HepG2 (cell line): ENCODE measurements at regions of chr15 and their contacts with region 1.

Region 1: GRCh38 chr15:34437687-34438086 is at the start of gene GOLGA8A:
- DNase-seq: peak; percentile 26
- ATAC-seq: peak; percentile 39
- H3K4me3 ChIP-seq: peak within 1 kb of the TSS; percentile 47 to 66 (median 61); a peak in 5 of 6 replicates
- H3K27ac ChIP-seq: no peak within 1 kb of the TSS
- H3K4me1 ChIP-seq: peaks cover 10% of the 10 kb centered on the region
- H3K27me3 ChIP-seq: no peaks in the 10 kb centered on the region; a peak in 1 of 5 replicates
- CTCF ChIP-seq: no peak
- EP300 ChIP-seq: no peak
- POLR2A ChIP-seq: peak in 1 of 2 experiments; percentile 38; a peak in 1 of 4 replicates
- RAD21 ChIP-seq: no peak
- total RNA-seq, gene GOLGA8A: 1.6 and 17.1 TPM in 2 replicates

Region 2: DNA sequence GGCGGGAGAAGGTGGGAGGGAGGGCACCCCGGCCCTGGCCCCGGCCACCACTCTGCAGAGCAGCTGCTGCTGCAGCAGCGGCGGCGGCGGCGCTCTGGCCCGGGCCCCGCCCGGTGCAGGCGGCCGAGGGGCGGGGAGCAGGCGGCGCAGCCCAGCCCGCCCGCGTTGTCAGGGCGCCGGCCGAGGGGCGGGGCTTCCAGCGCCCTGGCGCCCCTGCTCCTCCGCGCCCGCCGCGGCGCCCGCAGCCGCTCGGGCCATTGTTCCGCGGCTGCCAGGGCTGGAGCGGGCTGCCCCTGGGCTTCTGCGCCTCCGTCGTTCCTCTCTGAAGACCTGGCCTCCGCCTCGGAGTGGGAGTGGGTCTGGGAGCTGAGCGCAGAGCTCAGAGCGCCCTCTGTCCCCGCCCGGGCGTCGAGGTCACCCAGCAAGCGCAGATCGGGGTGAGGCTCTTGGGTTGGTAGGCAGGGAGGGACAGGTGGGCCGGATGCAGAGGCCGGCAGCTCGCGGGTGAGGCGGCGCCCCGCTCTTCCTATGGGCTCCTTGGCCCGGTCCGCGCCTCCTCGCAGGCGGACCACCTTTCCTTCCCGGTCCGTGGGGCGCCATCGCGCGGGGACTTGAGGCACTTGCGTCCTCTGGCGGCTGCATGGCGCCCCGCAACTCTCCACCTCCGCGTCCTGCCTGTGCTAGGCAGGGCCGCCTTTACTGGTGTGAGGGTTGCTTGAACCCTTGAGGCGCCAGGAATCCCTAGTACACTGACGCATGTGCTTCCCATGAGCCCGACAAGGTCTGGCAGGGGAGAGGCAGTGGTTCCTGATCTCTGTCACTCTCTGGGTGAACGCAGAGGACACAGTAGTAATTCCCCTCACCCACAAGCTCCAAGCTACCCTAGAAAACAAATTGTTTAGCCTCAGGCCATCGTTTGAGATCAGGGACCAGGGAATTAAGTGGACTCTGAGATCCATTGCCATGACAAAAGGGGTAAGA is 70.3 kb before region 1 on chr15 and contains the start of gene LPCAT4:
- CTCF ChIA-PET with region 1: no interaction called
- POLR2A ChIA-PET with region 1: no interaction called
- in situ Hi-C with region 1: loop called (anchors 10 kb)
- intact Hi-C with region 1: no loop called
- DNase-seq: peak; percentile 66
- ATAC-seq: peak; percentile 90
- H3K4me3 ChIP-seq: peak within 1 kb of the TSS; percentile 59 to 94 (median 87)
- H3K27ac ChIP-seq: peak within 1 kb of the TSS; percentile 94
- H3K4me1 ChIP-seq: peaks cover 21% of the 10 kb centered on the region
- H3K27me3 ChIP-seq: no peaks in the 10 kb centered on the region
- CTCF ChIP-seq: peak; percentile 98
- EP300 ChIP-seq: 0 out of 4 replicates have a peak, but pooled peaks of 1 of the 2 experiments have one; percentile 18
- POLR2A ChIP-seq: peak; percentile 74 to 87
- RAD21 ChIP-seq: peak; percentile 84
- total RNA-seq, gene LPCAT4: 2.2 and 8.1 TPM in 2 replicates

Region 3: DNA sequence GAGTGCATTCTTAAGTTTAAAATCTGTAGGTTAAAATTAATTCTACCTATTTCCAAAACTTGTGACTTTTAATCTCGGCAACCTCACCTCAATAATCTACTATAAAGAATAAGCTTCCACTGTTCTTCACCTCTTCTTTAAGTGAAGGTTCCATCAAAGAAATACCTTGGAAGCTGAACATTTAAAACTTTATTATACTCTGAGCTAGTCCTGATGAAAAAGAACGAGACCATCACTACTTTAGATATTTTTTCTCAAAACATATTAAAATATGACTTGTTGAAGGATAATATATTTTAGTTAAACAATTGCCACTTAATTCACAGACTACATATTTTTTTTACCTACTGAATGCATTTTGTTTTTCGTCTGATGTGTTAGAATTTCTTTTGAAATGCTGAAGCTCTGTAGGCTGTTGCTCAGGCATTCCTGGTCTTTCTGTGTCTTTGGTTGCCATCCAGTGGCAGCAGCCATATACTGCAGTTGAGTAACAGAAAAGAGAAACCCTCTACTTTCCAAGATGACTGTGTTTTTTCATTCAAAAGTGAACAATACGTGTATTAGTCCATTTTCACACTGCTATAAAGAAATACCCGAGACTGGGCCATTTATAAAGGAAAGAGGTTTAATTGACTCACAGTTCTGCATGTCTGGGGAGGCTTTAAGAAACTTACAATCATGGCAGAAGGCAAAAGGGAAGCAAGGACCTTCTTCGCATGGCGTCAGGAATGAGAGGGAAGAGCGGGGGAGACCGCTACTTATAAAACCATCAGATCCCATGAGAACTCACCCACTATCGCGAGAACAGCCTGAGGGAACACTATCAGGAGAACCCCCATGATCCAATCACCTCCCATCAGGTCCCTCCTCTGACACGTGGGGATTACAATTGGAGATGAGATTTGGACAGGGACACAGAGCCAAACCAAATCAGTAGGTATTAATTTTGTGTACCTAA is 150.3 kb after region 1 on chr15:
- CTCF ChIA-PET with region 1: no interaction called
- POLR2A ChIA-PET with region 1: no interaction called
- in situ Hi-C with region 1: loop called (anchors 25 kb)
- intact Hi-C with region 1: no loop called
- DNase-seq: peak; percentile 80
- ATAC-seq: peak; percentile 42
- H3K4me3 ChIP-seq: peak overlapping the region; percentile 19 to 44 (median 40); a peak in 1 of 6 replicates
- H3K27ac ChIP-seq: no peak overlapping the region
- H3K4me1 ChIP-seq: peaks cover 12% of the 10 kb centered on the region; the same call in 1 of the 2 replicates
- H3K27me3 ChIP-seq: no peaks in the 10 kb centered on the region
- CTCF ChIP-seq: peak; percentile 85
- EP300 ChIP-seq: no peak
- POLR2A ChIP-seq: peak; percentile 78 to 95
- RAD21 ChIP-seq: peak; percentile 67